ENCODE measurements at regions of chr1 and their contacts with region 1.

Region 1: GRCh38 chr1:46442317-46443161 is 47.1 kb upstream of the DMBX1 start:
- DNase-seq: peak; percentile 81
- CTCF ChIP-seq: peak; percentile 85

Region 2: DNA sequence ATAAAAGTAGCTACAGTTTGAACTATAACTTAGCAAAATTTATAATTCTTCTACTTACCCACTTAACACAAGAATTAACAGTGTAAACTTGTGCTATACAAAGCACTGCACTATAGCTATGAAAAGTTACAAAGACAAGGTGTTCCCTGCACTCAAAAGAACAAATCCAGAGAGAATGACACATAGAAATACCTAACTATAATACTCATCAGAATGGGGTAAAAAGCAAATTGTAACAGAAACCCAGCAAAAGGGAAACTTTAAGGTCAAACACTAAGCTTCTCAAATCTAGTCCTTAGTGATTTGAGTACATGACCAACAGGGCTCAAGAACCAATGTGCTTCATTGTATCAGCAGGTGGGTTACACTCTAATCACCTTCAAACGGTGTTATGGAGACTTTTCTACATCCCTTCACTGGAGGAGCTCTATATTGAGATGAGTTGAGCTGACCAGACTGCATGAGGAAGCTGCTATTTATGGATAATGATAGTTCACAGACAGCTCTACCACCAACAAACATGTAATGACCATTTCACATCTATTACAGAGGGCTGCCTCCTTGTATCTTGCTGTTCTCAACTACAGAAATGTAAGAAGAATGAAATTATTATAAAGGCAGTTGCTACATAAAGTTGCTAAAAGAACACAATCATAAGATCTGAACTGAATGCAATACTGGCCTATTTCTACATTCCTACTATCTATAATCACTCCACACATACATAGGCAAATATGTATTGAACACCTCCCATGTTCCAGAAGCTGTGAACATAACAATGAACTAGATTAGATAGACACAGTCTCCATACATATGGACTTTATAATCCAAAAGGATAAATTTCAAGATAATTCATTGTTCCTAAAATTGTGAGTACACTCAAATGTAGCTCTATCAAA is 357.7 kb before region 1 on chr1:
- CTCF ChIA-PET with region 1: no interaction called
- POLR2A ChIA-PET with region 1: no interaction called
- DNase-seq: no peak
- CTCF ChIP-seq: no peak

Region 3: DNA sequence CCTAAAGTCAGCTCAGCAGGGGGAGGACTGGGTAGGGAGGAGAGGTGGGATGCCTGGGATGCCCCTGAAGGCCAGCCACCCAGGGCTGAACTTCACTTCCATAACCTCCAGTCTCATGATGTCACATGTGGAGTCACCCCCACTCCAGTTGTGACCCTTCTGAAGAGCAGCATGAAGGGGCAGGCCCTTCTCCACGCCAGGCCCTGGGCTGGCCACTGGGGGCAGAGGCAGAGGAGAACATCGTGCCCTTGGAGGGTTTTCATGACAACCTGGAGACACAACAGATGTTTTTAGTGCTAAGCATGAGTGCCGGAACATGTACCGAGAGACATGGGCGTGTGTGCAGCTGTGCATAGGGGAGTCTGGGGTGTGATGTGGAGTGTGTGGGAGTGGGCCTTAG is 10.8 kb before region 1 on chr1:
- CTCF ChIA-PET with region 1: interaction called, 32 read pairs
- POLR2A ChIA-PET with region 1: no interaction called
- DNase-seq: no peak
- CTCF ChIP-seq: no peak

Region 4: GRCh38 chr1:46477153-46477929 is 34.8 kb after region 1 on chr1:
- CTCF ChIA-PET with region 1: interaction called, 11 read pairs
- POLR2A ChIA-PET with region 1: no interaction called
- DNase-seq: peak; percentile 87
- CTCF ChIP-seq: peak; percentile 91

Region 5: DNA sequence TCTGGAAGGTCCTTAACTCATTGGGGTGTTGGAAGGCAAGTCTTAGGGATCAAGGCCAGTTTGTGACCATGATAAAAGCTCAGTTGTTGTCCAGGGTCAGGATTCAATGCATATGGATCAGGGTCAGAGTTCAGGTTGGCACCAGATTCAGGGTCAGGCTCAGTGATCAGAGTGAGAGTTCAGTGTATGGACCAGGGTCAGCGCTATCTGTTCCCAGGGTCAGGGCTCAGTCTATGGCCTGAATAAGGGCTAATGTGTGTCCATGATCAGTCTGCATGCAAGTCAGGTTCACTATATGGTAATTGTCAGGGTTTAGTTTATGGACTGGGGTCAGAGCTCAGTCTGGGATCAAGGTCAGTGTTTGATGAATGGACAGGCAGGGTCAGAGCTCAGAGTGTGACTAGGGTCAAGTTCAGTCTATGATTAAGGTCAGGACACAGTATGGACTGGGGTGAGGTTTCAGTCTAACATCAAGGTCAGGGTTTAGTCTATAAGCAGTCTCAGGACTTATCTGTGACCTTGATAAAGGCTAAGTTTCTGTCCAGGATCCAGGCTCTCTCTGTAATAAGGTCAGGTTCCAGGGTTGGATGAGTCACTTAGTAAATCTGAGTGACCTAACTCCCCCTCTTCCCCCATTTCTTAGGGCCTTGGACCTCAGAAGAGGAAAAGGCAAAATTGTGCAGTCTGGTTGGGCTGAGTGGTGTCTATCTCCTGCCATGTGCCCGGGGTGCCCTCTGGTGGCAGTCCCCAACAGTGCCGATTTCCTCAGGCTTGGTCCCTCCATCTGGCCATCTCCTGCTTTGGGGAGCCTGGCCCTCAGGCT is 85.1 kb after region 1 on chr1:
- CTCF ChIA-PET with region 1: interaction called, 82 read pairs
- POLR2A ChIA-PET with region 1: no interaction called
- DNase-seq: peak; percentile 87
- CTCF ChIP-seq: peak; percentile 97

Region 6: DNA sequence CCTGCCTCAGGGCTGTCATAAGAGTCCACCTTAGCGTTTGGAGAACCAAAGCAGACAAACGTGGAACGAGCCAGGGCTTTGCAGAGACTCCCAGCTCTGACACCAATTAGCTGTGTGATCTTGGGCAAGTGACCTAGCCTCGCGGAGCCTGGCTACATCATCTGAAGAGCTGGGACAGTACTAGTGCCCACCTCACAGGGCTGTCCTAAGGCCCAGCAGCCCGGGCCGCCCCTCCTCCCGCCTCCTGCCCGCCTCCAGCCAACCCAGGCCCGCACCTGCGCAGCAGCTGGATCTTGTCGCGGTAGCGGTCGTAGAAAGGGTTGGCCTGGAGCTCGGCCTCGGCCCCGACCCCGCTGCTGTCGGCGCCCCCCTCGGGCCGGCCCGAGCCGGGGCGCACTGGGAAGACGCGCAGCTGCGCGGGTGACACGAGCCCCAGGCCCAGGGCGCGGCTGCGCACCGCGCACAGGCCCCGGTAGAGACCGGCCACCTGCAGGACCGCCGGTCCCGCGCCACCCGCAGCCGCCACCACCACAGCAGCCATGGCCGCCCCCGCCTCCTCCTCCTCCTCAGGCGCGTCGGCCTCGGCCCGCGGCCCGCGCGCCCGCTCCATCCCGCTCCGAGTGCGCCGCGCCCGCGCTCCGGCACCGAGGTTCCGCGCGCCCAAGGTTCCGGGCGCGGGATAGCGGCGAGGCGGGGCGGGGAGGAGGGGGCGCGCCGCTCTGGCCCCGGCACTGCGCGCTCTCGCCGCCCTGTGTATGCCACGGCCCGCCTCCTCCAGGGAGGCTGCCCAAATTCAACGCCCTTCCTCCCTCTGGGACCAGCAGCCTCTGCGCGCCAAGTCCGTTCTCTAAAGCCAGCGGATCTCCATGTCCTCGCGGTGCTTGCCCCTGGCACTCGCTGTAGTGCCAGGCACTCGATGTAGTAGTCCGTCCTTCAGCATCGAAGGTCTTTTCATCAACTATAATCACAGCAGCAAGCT is 225.5 kb after region 1 on chr1 and contains the start of gene ATPAF1:
- CTCF ChIA-PET with region 1: no interaction called
- POLR2A ChIA-PET with region 1: no interaction called
- DNase-seq: peak; percentile 85
- CTCF ChIP-seq: no peak

Region 7: DNA sequence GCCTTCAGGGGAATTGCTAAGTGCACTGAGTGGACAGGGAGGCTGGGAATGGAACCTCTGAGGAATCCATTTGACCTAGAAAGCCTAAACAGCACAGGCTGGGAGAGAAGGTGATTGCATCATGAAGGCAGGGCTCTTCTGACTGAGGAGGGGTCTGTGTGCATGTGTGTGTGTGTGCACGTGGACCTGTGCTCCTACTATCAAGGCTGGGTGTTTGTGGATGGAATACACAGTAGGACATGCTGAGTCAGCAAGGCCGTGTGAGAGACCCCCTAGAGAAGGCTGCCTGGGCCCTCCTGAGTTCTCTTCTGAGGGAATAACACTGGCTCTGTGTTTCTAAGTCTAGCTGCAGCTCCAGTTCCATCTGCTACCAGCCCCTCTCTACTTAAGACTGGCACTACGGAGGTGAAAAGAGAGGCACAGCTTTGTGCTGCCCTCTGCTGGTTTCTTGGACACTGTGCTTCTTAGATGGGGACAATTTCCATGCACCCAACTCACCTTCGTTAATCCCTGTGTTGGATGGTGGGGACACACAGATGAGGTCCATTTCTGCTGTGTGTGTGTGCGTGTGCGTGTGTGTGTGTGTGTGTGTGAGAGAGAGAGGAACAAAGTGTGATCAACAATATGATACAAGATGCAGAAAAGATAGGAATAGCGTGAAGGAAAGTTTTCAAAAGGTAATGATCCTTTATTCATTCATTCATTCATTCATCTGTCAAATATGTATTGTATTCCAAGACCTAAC is 282.6 kb after region 1 on chr1:
- CTCF ChIA-PET with region 1: interaction called, 14 read pairs
- POLR2A ChIA-PET with region 1: no interaction called
- DNase-seq: peak; percentile 43
- CTCF ChIP-seq: peak; percentile 89